GM23248 (cell line): ENCODE measurements at regions of chr6 and their contacts with region 1.

Region 1: DNA sequence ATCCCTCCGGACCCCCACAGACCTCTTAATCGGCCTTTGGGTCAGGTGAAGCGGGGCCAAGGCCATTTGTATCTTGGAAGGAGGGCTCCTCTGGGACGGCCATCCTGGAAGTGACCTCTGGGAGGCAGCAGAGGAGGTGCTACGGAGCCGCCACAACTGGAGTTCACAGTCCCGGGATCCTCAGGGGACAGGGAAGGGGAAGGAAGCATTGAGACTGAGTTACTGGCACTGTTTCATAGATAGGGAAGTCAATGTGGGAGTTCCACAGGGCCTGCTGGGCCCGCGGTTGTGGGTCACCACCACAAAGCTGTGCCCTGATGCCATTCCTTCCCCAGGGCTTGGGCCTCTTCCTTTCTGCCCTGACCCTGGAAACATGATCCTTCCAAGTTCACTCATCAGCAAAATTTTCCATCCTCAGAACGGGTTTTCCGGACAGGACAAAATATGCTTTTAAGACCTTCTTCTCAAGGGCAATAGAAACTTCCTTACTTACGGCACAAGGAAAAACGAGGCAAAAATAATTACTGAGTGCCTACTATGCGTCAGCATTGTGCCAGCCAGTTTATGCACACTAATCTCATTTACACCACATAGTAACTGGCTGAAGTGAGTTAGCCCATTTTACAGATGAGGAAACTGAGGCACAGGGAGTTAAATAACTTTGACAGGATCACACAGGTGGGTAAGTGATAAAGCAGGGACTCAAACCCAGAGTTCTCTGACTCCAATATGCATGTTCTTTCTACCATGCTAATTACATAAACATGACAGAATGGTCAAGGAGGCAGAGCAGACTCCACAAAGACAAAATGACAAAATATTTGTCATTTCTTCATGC is 143.8 kb downstream of the UNC5CL start:
- DNase-seq: peak; percentile 81
- H3K4me3 ChIP-seq: no peak overlapping the region
- H3K27ac ChIP-seq: no peak overlapping the region
- H3K4me1 ChIP-seq: no peaks in the 10 kb centered on the region
- H3K27me3 ChIP-seq: peaks cover 6% of the 10 kb centered on the region; the same call in 1 of the 2 replicates

Region 2: DNA sequence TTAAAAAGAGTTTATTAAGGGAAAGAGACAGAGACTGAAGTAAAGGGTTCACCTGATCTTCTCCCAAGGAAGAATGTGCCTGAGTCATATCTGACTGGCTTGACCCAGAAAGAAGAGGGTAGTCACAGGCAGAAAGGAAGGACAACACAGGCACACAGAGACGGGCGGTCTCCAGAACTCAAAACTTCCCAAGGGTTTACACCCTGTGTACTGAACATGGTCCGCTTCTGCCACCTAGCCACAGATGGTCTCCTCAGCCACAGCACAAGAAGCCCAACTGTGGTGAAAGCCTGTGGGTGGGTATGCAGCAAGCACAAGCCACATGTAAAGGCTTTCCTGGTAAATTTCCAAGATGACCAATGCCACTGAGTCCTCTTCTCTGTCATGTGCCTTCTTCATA is 126.7 kb after region 1 on chr6:
- in situ Hi-C with region 1: loop called (anchors 5 kb)
- DNase-seq: peak; percentile 65
- H3K4me3 ChIP-seq: no peak overlapping the region
- H3K27ac ChIP-seq: no peak overlapping the region
- H3K4me1 ChIP-seq: peaks cover 12% of the 10 kb centered on the region
- H3K27me3 ChIP-seq: no peaks in the 10 kb centered on the region

Region 3: GRCh38 chr6:41092421-41093140 is 197.4 kb after region 1 on chr6:
- in situ Hi-C with region 1: no loop called
- DNase-seq: peak; percentile 54
- H3K4me3 ChIP-seq: no peak overlapping the region
- H3K27ac ChIP-seq: no peak overlapping the region
- H3K4me1 ChIP-seq: no peaks in the 10 kb centered on the region
- H3K27me3 ChIP-seq: no peaks in the 10 kb centered on the region